Adrenal gland (tissue), 19 donors: ENCODE measurements at regions of chr12 and their contacts with region 1.

Region 1: DNA sequence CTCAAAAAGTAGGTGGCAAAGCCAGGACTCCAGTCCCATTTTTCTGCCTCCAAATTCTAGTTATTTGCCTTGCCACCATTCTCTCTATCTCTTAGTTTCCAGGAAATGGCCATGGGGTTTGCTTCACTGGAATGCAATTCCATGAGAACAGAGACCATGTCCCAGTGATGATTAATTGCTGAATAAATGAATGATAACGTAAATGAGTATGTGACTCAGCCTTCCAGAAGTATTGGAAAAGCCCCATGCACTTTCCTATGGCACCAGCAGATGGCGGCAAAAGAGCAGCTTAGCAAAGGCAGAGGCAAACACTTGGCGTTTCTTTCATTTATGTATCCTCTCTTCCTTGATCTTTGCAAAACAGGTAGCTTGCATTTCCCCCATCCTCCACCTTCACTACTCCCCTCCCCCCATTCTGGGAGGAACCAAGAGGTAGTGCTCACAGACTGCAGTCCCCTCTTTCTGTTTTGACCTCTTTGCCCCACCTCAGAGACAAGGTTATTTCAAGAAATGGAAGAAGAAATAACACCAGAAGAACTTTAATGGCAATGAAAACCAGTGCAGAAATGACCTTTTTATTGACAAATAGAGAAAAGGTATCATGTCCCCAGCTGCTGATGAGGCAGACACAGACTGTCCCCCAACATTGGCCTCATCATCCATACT is 21.3 kb downstream of the TBX3 start:
- DNase-seq: peak; percentile 85 to 98 (median 95)
- H3K4me3 ChIP-seq: no peak overlapping the region
- H3K27ac ChIP-seq: peak overlapping the region in 4 of 5 donors; percentile 15 to 82 (median 47)
- H3K4me1 ChIP-seq: peaks cover 10 to 32% of the 10 kb centered on the region in 2 donors
- H3K27me3 ChIP-seq: no peaks in the 10 kb centered on the region
- CTCF ChIP-seq: peak; percentile 90 to 99 (median 97)
- POLR2A ChIP-seq: peak in 1 of 2 donors; percentile 9

Region 2: DNA sequence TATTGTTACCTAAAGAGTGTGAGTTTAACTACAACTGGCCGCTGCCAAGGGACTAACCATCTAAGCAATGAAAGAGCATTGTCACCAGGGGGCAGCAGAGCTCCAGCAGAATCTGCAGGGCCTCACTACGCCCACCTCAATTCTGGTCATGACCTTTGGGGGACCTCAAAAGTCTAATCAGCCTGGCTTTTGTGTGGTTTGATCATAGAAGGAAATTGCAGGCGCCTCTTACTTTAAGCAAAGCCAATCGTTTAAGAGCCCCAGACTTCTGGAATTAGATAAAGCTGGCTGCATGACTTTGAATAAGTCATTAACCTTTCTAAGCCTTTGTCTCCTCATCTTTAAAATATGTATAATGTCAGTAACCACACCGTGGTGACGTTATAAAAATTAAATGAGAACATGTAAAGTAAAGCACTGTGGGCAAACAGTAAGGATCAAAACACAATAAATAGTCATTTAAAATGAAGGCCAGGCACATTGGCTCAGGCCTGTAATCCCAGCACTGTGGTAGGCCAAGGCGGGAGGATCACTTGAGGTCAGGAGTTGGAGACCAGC is 37.3 kb before region 1 on chr12:
- intact Hi-C with region 1: loop called in 1 of 2 experiments (anchors 5 kb)
- DNase-seq: peak; percentile 54 to 76 (median 64)
- H3K4me3 ChIP-seq: no peak overlapping the region
- H3K27ac ChIP-seq: no peak overlapping the region
- H3K4me1 ChIP-seq: no peaks in the 10 kb centered on the region
- H3K27me3 ChIP-seq: no peaks in the 10 kb centered on the region
- CTCF ChIP-seq: peak; percentile 68 to 84 (median 79)
- POLR2A ChIP-seq: no peak

Region 3: GRCh38 chr12:115752913-115753726 is 1090.5 kb after region 1 on chr12:
- intact Hi-C with region 1: loop called (anchors 5 kb)
- DNase-seq: peak; percentile 57 to 79 (median 66)
- H3K4me3 ChIP-seq: no peak overlapping the region
- H3K27ac ChIP-seq: peak overlapping the region in 1 of 5 donors; percentile 11
- H3K4me1 ChIP-seq: peaks cover 6 to 16% of the 10 kb centered on the region in 2 donors
- H3K27me3 ChIP-seq: no peaks in the 10 kb centered on the region
- CTCF ChIP-seq: peak; percentile 47 to 84 (median 74)
- POLR2A ChIP-seq: no peak